ENCODE measurements at regions of chrX and their contacts with region 1.

Region 1: GRCh38 chrX:31061091-31061490 is 10.8 kb downstream of the FTHL17 start:
- DNase-seq: peak; percentile 5
- ATAC-seq: no peak
- H3K4me3 Mint-ChIP-seq: no peak overlapping the region
- H3K27ac Mint-ChIP-seq: no peak overlapping the region
- H3K4me1 Mint-ChIP-seq: peaks cover 4% of the 10 kb centered on the region
- H3K27me3 Mint-ChIP-seq: no peaks in the 10 kb centered on the region

Region 2: GRCh38 chrX:30957753-30958152 is 103.3 kb before region 1 on chrX:
- CTCF ChIA-PET with region 1: no interaction called
- POLR2A ChIA-PET with region 1: no interaction called
- intact Hi-C with region 1: no loop called
- DNase-seq: no peak
- ATAC-seq: no peak
- H3K4me3 Mint-ChIP-seq: no peak overlapping the region
- H3K27ac Mint-ChIP-seq: no peak overlapping the region
- H3K4me1 Mint-ChIP-seq: no peaks in the 10 kb centered on the region
- H3K27me3 Mint-ChIP-seq: no peaks in the 10 kb centered on the region

Region 3: GRCh38 chrX:31099536-31100090 is 38.5 kb after region 1 on chrX:
- CTCF ChIA-PET with region 1: no interaction called
- POLR2A ChIA-PET with region 1: no interaction called
- intact Hi-C with region 1: loop called (anchors 1 to 5 kb)
- DNase-seq: peak; percentile 75
- ATAC-seq: peak; percentile 94
- H3K4me3 Mint-ChIP-seq: no peak overlapping the region
- H3K27ac Mint-ChIP-seq: peak overlapping the region; percentile 60
- H3K4me1 Mint-ChIP-seq: peaks cover 11% of the 10 kb centered on the region
- H3K27me3 Mint-ChIP-seq: no peaks in the 10 kb centered on the region

Region 4: DNA sequence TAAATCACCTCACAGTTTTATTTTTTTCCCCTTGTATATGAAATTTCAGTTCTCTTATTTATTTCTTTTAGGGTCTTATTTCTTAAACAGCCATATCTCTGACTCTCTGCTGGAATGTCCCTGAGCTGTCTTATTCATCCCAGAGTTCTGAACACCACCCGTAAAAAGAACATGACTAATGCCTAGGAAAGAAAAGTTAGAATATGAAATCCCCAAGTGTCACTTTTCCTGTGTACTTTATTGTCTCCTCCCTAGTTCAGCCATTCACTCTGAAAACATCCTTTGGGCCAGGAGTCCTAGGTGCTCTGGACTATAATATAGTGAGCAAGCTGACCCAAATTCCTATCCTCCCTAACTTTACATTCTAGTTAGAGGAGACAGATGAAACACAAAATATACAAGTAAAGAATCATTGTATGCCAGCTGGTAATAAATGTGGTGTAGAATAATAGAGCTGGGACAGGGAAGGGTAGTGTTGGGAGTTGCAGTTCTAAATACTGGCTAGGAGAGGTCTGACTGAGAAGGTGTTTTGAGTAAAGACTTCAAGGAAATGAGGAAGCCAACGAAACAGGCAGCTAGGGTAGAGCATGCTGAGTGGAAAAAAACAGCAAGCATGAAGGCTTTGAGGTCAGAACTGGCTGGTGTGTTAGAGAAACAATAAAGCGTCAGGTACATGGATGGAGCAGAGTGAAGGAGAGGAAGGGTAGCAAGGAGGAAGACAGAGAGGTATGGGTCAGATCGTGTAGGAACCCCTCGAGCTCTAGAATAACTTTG is 51.3 kb after region 1 on chrX:
- CTCF ChIA-PET with region 1: no interaction called
- POLR2A ChIA-PET with region 1: no interaction called
- intact Hi-C with region 1: loop called in 1 of 2 experiments (anchors 5 kb)
- DNase-seq: no peak
- ATAC-seq: peak; percentile 60
- H3K4me3 Mint-ChIP-seq: no peak overlapping the region
- H3K27ac Mint-ChIP-seq: peak overlapping the region; percentile 39
- H3K4me1 Mint-ChIP-seq: peaks cover 8% of the 10 kb centered on the region
- H3K27me3 Mint-ChIP-seq: peaks cover 7% of the 10 kb centered on the region